H1 (cell line): ENCODE measurements at regions of chr13 and their contacts with region 1.

Region 1: GRCh38 chr13:46553886-46554858 is 1.2 kb downstream of the LRCH1 start:
- DNase-seq: peak in 1 of 2 experiments; percentile 54
- H3K4me3 ChIP-seq: peak overlapping the region; percentile 71 to 94 (median 86)
- H3K27ac ChIP-seq: no peak overlapping the region; the same call in 1 of the 2 replicates
- H3K4me1 ChIP-seq: peaks cover 0 to 14% (median 2%) of the 10 kb centered on the region in 4 experiments; a peak in 4 of 7 replicates
- H3K27me3 ChIP-seq: peaks cover 0 to 22% (median 7%) of the 10 kb centered on the region in 4 experiments; a peak in 4 of 7 replicates
- CTCF ChIP-seq: peak in 2 of 3 experiments; percentile 15 to 19; a peak in 2 of 4 replicates
- EP300 ChIP-seq: no peak
- POLR2A ChIP-seq: no peak; a peak in 1 of 3 replicates
- RAD21 ChIP-seq: no peak; a peak in 1 of 4 replicates

Region 2: DNA sequence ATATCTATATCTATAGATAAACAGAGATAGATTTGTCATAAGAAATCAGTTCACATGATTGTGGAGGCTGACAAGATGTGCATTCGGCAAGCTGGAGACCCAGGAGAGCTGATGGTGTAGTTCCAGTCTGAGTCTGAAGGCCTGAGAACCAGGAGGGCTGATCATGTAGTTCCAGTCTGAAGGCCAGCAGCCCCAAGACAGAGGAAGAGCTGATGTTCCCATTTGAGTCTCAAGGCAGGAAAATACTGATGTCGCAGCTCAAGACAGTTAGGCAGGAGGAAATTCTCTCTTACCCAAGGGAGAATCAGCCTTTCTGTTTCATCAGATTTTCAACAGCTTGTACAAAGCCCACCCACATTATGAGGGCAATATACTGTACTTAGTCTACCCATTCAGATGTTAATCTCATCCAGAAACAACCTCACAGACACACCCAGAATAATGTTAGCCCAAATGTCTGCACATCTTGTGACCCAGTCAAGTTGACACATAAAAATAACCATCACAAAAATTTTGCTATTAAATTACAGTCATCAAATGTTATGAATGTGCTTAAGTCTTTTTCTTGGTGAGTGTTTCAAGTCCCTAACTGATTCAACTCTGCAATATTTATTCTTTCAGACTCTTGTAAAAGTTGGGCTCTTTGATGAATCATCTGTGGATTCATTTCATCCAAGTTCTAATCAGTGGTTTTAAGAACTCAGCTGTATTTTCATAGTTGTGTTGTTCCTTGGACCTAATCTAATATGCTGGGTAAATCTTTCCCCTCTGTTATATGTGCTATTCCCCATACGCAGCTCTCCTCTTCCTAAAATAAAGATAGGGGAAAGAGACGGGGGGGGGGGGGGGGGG is 23.9 kb before region 1 on chr13:
- CTCF ChIA-PET with region 1: interaction called, 11 read pairs
- POLR2A ChIA-PET with region 1: no interaction called
- DNase-seq: no peak
- H3K4me3 ChIP-seq: no peak overlapping the region
- H3K27ac ChIP-seq: no peak overlapping the region
- H3K4me1 ChIP-seq: no peaks in the 10 kb centered on the region
- H3K27me3 ChIP-seq: no peaks in the 10 kb centered on the region
- CTCF ChIP-seq: no peak
- EP300 ChIP-seq: no peak
- POLR2A ChIP-seq: no peak
- RAD21 ChIP-seq: no peak

Region 3: GRCh38 chr13:46541210-46541609 is 13.0 kb before region 1 on chr13:
- CTCF ChIA-PET with region 1: interaction called, 10 read pairs
- POLR2A ChIA-PET with region 1: no interaction called
- DNase-seq: no peak
- H3K4me3 ChIP-seq: no peak overlapping the region
- H3K27ac ChIP-seq: no peak overlapping the region
- H3K4me1 ChIP-seq: no peaks in the 10 kb centered on the region
- H3K27me3 ChIP-seq: no peaks in the 10 kb centered on the region
- CTCF ChIP-seq: no peak
- EP300 ChIP-seq: no peak
- POLR2A ChIP-seq: no peak
- RAD21 ChIP-seq: no peak

Region 4: GRCh38 chr13:46721054-46721453 is 166.9 kb after region 1 on chr13:
- CTCF ChIA-PET with region 1: interaction called, 64 read pairs
- POLR2A ChIA-PET with region 1: no interaction called
- DNase-seq: no peak
- H3K4me3 ChIP-seq: no peak overlapping the region
- H3K27ac ChIP-seq: no peak overlapping the region
- H3K4me1 ChIP-seq: no peaks in the 10 kb centered on the region
- H3K27me3 ChIP-seq: no peaks in the 10 kb centered on the region
- CTCF ChIP-seq: peak in 2 of 3 experiments; percentile 56 to 68; a peak in 3 of 4 replicates
- EP300 ChIP-seq: no peak
- POLR2A ChIP-seq: no peak
- RAD21 ChIP-seq: peak; percentile 83 to 84